ENCODE measurements at regions of chr10 and their contacts with region 1.

Region 1: GRCh38 chr10:33193057-33193700 is 141.3 kb downstream of the NRP1 start:
- DNase-seq: peak; percentile 81 to 91
- H3K4me3 ChIP-seq: no peak overlapping the region
- H3K27ac ChIP-seq: no peak overlapping the region
- H3K4me1 ChIP-seq: peaks cover 0 to 17% of the 10 kb centered on the region in 2 donors
- H3K27me3 ChIP-seq: no peaks in the 10 kb centered on the region
- CTCF ChIP-seq: peak; percentile 35 to 85 (median 66)
- POLR2A ChIP-seq: no peak

Region 2: GRCh38 chr10:33330543-33331378 is 137.6 kb after region 1 on chr10:
- intact Hi-C with region 1: loop called (anchors 10 kb)
- DNase-seq: peak; percentile 83 to 88
- H3K4me3 ChIP-seq: peak overlapping the region in 1 of 3 donors; percentile 14
- H3K27ac ChIP-seq: peak overlapping the region; percentile 44 to 95 (median 53)
- H3K4me1 ChIP-seq: peaks cover 17 to 29% of the 10 kb centered on the region in 2 donors
- H3K27me3 ChIP-seq: no peaks in the 10 kb centered on the region
- CTCF ChIP-seq: peak; percentile 72 to 88 (median 83)
- POLR2A ChIP-seq: no peak